ENCODE measurements at regions of chr19 and their contacts with region 1.

Region 1: GRCh38 chr19:14198384-14199376 is 7.3 kb downstream of the ADGRL1 start:
- DNase-seq: no peak
- H3K4me3 ChIP-seq: no peak overlapping the region
- H3K27ac ChIP-seq: no peak overlapping the region
- H3K4me1 ChIP-seq: no peaks in the 10 kb centered on the region
- H3K27me3 ChIP-seq: no peaks in the 10 kb centered on the region
- CTCF ChIP-seq: peak; percentile 19; the same call in 1 of the 2 replicates

Region 2: GRCh38 chr19:14167576-14168138 is 31.0 kb before region 1 on chr19:
- CTCF ChIA-PET with region 1: no interaction called
- POLR2A ChIA-PET with region 1: no interaction called
- intact Hi-C with region 1: no loop called
- DNase-seq: no peak
- H3K4me3 ChIP-seq: no peak overlapping the region
- H3K27ac ChIP-seq: no peak overlapping the region
- H3K4me1 ChIP-seq: no peaks in the 10 kb centered on the region
- H3K27me3 ChIP-seq: no peaks in the 10 kb centered on the region
- CTCF ChIP-seq: no peak

Region 3: GRCh38 chr19:14218620-14219330 is 20.1 kb after region 1 on chr19:
- CTCF ChIA-PET with region 1: interaction called, 13 read pairs
- POLR2A ChIA-PET with region 1: no interaction called
- intact Hi-C with region 1: no loop called
- DNase-seq: no peak
- H3K4me3 ChIP-seq: no peak overlapping the region
- H3K27ac ChIP-seq: no peak overlapping the region
- H3K4me1 ChIP-seq: peaks cover 4% of the 10 kb centered on the region; the same call in 1 of the 2 replicates
- H3K27me3 ChIP-seq: no peaks in the 10 kb centered on the region
- CTCF ChIP-seq: no peak

Region 4: DNA sequence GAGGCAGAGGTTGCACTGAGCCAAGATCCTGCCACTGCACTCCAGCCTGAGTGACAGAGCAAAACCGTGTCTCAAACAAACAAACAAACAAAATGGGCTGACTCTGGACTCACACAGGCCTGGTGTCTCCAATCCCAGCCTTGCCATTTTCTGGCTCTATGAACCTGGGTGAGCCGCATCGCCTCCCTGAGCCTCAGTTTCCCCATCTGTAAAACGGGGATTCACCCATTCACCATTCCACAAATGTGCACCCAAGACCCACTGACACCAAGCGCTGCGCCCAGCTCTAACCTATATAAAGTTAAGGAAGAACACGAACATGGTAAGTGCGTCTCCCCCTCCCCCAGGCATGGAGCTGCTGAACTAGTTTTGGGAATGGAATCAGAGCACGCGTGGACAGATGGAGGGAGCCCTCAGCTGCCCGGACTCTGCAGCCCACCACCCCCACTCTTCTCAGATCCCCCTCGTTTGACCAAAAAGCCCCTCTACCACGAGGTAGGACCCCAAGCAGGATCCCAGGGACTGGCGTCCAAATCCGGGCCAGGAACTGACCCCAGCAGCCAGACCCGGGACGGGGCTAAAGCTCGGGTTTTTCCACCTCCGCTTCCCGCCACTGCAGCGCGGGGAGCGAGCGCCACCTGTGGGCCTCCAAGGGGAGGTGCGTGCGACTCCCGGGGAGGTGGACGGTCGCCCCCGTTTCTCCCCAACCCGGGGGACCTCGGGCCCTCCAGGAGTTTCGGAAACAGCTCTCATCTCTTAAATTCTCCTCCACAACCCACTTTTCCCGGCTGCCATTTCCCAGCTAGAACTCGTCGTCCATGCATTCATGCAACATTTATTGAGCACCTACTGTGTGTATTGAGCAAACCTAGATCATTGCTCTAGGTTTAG is 149.6 kb after region 1 on chr19:
- CTCF ChIA-PET with region 1: interaction called, 3 read pairs
- POLR2A ChIA-PET with region 1: no interaction called
- intact Hi-C with region 1: loop called (anchors 5 kb)
- DNase-seq: peak in 1 of 2 experiments; percentile 65
- H3K4me3 ChIP-seq: peak overlapping the region; percentile 29; the same call in 1 of the 2 replicates
- H3K27ac ChIP-seq: no peak overlapping the region
- H3K4me1 ChIP-seq: no peaks in the 10 kb centered on the region
- H3K27me3 ChIP-seq: no peaks in the 10 kb centered on the region
- CTCF ChIP-seq: peak; percentile 99

Region 5: GRCh38 chr19:14405758-14406644 is 207.3 kb after region 1 on chr19:
- CTCF ChIA-PET with region 1: no interaction called
- POLR2A ChIA-PET with region 1: no interaction called
- intact Hi-C with region 1: loop called (anchors 10 kb)
- DNase-seq: peak; percentile 81 to 89
- H3K4me3 ChIP-seq: peak overlapping the region; percentile 37; the same call in 1 of the 2 replicates
- H3K27ac ChIP-seq: no peak overlapping the region
- H3K4me1 ChIP-seq: 0 out of 2 replicates have a peak, but pooled peaks cover 10% of the 10 kb centered on the region
- H3K27me3 ChIP-seq: no peaks in the 10 kb centered on the region
- CTCF ChIP-seq: peak; percentile 70

Measured in PC-9 (cell line).